Activated CD4-positive, alpha-beta memory T cell treated with anti-CD3 and anti-CD28 coated beads, Interleukin-2, amount 10 ng/mL, durations not matched to agents 7 days and 5 days (primary cell): ENCODE measurements at regions of chr6 and their contacts with region 1.

Region 1: DNA sequence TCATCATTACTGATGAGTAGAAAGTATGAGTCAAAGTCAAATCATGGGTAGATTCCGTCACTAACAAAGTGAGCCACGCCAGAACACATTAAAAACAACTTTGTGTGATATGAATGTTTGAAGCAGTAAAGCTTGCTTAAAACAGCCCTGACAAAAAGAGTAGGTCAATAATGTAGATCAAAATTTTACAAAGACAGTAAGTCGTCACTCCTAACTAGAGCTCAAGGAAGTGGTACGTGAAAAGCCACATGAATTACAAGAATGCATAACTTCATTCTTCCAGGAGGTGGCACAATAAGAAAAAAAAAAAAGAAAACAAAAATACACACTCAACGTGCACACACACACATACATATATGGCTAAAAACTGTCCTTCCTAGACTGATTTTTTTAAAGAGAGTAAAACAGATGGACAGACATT is 69.9 kb downstream of the HACE1 start:
- DNase-seq: no peak
- H3K4me3 Mint-ChIP-seq: peak overlapping the region; percentile 55
- H3K27ac Mint-ChIP-seq: peak overlapping the region; percentile 92
- H3K4me1 Mint-ChIP-seq: peaks cover 42% of the 10 kb centered on the region
- H3K27me3 Mint-ChIP-seq: no peaks in the 10 kb centered on the region

Region 2: GRCh38 chr6:104682722-104683643 is 106.8 kb before region 1 on chr6:
- CTCF ChIA-PET with region 1: interaction called, 19 read pairs
- POLR2A ChIA-PET with region 1: interaction called, 3 read pairs
- DNase-seq: peak; percentile 76
- H3K4me3 Mint-ChIP-seq: no peak overlapping the region
- H3K27ac Mint-ChIP-seq: no peak overlapping the region
- H3K4me1 Mint-ChIP-seq: peaks cover 15% of the 10 kb centered on the region
- H3K27me3 Mint-ChIP-seq: no peaks in the 10 kb centered on the region

Region 3: DNA sequence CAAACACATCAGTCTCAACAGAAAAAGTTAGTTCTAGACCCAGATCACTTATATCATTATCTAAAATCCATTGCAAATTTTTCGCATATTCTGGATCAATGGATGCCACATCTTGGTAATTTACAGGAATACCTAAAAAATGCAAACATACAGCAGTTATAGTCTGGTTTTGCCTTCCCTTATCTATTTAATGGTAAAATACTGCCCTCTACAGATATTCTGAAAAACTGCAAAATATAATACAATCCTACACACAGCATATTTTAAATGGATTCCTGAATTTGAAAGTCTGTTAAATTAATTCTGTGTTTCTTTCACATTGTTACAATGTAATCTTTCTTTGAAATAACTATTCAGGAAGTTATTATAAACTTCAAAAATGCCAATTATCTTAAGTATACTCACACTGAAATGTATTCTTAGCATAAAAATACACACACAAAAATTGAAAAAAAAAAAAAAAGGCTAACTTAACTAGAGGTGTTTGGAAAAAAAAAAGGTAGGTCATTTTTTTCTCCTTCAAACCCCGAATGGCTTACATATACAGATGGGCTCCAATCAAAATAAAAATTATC is 18.4 kb before region 1 on chr6:
- CTCF ChIA-PET with region 1: interaction called, 18 read pairs
- POLR2A ChIA-PET with region 1: interaction called, 4 read pairs
- DNase-seq: no peak
- H3K4me3 Mint-ChIP-seq: no peak overlapping the region
- H3K27ac Mint-ChIP-seq: no peak overlapping the region
- H3K4me1 Mint-ChIP-seq: peaks cover 7% of the 10 kb centered on the region
- H3K27me3 Mint-ChIP-seq: no peaks in the 10 kb centered on the region

Region 4: DNA sequence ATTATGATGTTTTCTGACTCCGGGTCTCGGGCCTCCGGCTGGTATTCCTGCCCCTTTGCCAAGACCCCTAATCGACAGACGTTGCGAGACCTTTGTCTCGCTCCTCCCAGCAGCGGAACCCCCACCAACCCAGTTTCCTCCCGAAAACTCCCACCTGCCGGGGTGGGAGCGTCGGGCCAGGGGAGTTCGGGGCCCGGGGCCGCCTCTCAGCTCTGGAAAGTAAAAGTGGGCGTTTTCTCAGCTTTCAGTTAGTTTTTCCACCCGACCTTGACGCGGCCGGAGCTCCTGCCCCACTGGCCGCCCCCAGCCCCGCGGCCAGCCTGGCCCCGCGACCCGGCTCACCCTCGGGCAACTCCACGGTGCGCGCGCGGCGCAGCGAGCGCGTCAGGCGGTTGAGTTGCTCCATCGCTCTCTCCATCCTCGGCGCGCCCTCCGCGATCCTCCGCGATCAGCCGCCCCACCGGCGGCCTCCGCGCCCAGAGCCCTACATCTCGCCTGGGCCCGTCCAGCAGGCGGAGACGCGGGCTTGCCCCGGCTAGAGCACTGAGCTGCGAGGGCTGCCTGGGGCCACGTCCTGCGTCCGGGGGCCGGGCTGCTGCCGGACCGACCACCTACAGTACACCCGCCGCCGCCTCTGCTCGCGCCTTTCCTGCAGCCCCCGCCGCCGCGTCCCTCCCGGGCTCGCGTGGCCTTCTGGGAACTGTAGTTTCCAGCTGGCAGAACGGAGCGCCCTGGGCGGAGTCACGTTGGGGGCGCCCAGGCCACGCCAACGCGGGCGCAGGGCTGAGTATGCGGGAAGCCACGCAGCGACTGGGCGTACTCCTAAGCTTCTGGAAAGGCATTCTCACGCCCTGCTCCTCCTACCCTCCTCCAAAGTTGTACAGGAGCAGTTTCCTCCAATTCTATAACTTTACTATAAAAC is 69.7 kb after region 1 on chr6 and contains the start of gene HACE1:
- CTCF ChIA-PET with region 1: interaction called, 31 read pairs
- POLR2A ChIA-PET with region 1: interaction called, 4 read pairs
- DNase-seq: peak; percentile 91
- H3K4me3 Mint-ChIP-seq: peak within 1 kb of the TSS; percentile 87
- H3K27ac Mint-ChIP-seq: peak within 1 kb of the TSS; percentile 58
- H3K4me1 Mint-ChIP-seq: peaks cover 33% of the 10 kb centered on the region
- H3K27me3 Mint-ChIP-seq: peaks cover 8% of the 10 kb centered on the region
- total RNA-seq, gene HACE1: 21.6 to 22.4 TPM

Region 5: DNA sequence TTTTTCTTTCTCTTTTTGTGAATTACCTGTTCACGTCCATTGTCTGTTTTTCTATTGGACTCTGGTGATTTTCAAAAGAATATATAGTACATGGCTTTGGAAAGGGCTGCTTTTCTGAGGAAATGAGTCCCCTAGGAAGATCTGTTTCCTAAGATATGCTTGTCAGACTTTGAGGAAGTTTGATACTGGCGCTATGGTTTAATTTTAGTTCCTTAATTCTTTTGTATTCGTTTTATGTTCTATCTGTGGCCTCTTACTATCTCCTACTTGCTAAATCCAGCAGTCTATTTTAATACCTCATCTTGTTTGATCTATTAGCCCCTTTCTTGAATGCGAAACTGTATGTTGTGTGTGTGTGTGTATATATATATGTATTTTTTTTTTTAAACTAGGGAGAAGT is 269.1 kb after region 1 on chr6:
- CTCF ChIA-PET with region 1: no interaction called
- POLR2A ChIA-PET with region 1: no interaction called
- DNase-seq: no peak
- H3K4me3 Mint-ChIP-seq: no peak overlapping the region
- H3K27ac Mint-ChIP-seq: no peak overlapping the region
- H3K4me1 Mint-ChIP-seq: no peaks in the 10 kb centered on the region
- H3K27me3 Mint-ChIP-seq: peaks cover 34% of the 10 kb centered on the region

Region 6: GRCh38 chr6:105077596-105078385 is 288.0 kb after region 1 on chr6:
- CTCF ChIA-PET with region 1: interaction called, 12 read pairs
- POLR2A ChIA-PET with region 1: no interaction called
- DNase-seq: no peak
- H3K4me3 Mint-ChIP-seq: no peak overlapping the region
- H3K27ac Mint-ChIP-seq: no peak overlapping the region
- H3K4me1 Mint-ChIP-seq: no peaks in the 10 kb centered on the region
- H3K27me3 Mint-ChIP-seq: peaks cover 30% of the 10 kb centered on the region